Activated CD4-positive, alpha-beta T cell treated with anti-CD3 and anti-CD28 coated beads for 36 hours (primary cell): ENCODE measurements at regions of chr12 and their contacts with region 1.

Region 1: DNA sequence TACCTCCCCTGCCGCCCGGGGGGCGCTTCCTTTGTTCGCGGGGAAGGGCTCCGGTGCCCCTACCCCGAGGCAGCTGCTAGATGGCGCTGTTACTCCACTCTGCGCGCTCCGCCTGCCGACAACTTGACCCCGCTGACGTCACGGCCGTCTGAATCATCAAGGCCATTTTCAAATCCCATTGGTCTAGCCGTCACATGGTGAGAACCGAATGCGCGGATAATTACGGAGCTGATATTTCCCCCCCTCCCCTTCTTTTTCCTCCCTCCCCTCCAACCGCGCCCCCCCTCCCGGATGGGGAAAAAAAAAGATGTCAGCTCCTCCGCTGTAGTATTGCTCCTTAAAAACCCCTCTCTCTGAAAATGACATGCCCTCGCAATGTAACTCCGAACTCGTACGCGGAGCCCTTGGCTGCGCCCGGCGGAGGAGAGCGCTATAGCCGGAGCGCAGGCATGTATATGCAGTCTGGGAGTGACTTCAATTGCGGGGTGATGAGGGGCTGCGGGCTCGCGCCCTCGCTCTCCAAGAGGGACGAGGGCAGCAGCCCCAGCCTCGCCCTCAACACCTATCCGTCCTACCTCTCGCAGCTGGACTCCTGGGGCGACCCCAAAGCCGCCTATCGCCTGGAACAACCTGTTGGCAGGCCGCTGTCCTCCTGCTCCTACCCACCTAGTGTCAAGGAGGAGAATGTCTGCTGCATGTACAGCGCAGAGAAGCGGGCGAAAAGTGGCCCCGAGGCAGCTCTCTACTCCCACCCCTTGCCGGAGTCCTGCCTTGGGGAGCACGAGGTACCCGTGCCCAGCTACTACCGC is at the start of gene HOXC10:
- DNase-seq: peak; percentile 97
- ATAC-seq: peak; percentile 82
- H3K4me3 Mint-ChIP-seq: peak within 1 kb of the TSS; percentile 12
- H3K27ac Mint-ChIP-seq: no peak within 1 kb of the TSS
- H3K4me1 Mint-ChIP-seq: peaks cover 27% of the 10 kb centered on the region
- H3K27me3 Mint-ChIP-seq: peaks cover 85% of the 10 kb centered on the region
- total RNA-seq, gene HOXC10: not detected

Region 2: DNA sequence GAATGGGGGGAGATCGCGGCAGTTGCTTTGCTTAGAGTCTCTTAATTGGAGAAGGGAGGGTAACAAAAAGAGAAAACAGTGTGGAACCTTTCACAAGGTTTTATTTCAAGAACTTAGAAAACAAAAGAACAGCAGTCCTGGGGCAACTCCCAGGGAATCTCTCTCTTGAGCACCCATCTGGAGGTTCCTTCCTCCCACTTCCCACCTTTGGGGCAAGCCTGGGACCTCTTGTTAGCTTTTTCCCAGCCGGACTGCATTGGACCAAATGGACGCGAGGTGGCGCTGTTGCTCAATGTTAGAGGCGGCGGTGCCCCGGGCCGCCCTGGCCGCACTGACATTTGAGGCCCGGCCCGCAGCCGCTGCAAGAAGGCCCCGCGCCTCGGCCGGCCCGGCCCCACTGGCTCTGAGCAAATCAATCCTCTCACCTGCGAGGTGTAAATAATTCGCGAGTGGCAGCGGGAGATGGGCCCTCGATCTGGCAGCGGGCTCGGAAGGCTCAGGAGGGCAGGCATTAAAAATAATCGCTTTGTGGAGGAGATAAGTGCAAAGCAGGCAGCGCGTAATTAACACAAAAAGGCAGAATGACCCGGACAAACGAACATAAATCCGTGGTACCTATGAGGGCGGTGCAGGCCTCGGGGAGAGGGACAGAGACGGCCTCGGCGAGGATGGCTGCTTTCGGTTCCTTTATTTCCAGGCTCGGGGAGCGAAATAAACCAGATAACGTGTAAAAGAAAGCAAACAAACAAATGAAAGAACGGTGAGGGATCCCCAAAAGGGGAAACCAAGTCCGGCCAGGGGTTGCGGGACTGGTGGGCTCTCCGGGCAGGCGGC is 21.0 kb after region 1 on chr12:
- CTCF ChIA-PET with region 1: interaction called, 17 read pairs
- POLR2A ChIA-PET with region 1: no interaction called
- intact Hi-C with region 1: loop called (anchors 1 to 2 kb)
- DNase-seq: peak; percentile 91
- ATAC-seq: peak; percentile 81
- H3K4me3 Mint-ChIP-seq: peak overlapping the region; percentile 46
- H3K27ac Mint-ChIP-seq: no peak overlapping the region
- H3K4me1 Mint-ChIP-seq: peaks cover 29% of the 10 kb centered on the region
- H3K27me3 Mint-ChIP-seq: peaks cover 87% of the 10 kb centered on the region

Region 3: GRCh38 chr12:54053751-54054741 is 68.9 kb after region 1 on chr12 and contains the start of gene HOXC4:
- CTCF ChIA-PET with region 1: no interaction called
- POLR2A ChIA-PET with region 1: interaction called, 3 read pairs
- intact Hi-C with region 1: loop called (anchors 5 kb)
- DNase-seq: no peak
- ATAC-seq: no peak
- H3K4me3 Mint-ChIP-seq: peak within 1 kb of the TSS; percentile 0
- H3K27ac Mint-ChIP-seq: no peak within 1 kb of the TSS
- H3K4me1 Mint-ChIP-seq: peaks cover 21% of the 10 kb centered on the region
- H3K27me3 Mint-ChIP-seq: peaks cover 81% of the 10 kb centered on the region
- total RNA-seq, gene HOXC4: not detected

Region 4: DNA sequence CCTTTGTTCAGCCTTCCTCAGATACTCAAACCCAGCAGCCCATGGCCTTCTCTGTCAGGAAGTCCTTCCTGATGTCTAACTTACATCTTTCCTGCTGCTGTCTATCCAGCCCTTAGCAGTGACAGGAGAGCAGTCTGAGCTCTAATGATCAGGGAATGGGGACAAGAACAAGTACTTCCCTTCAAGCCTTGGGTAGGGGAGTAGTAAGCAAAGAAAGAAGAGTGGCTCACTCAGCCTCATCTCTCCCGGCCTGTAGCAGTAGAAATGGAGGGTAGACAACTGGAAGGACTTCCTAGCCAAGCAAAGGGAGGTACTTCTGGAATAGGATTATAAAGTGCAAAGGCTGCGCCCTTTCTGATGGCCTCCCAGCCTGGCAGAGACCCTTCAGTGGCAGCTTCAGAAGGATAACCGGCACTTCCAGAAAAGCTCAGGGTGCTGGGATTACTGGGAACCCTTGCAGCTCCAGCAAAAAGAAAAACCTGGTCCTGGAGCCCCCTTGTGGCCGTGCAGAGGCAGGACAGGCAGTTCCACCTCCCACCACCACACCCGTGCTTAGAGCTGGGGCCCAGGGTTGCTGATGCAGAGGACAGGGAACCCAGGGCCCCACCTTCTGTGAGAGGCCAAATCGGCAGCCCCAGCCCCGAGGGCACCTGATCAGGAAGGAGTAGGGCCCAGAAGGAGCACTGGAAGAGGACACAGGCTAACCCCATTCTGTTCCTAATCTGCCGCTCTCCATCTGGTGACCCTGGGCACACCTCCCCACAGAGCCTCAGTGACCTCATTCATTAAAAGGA is 216.1 kb after region 1 on chr12:
- CTCF ChIA-PET with region 1: interaction called, 37 read pairs
- POLR2A ChIA-PET with region 1: no interaction called
- intact Hi-C with region 1: loop called in 1 of 2 experiments (anchors 1 kb)
- DNase-seq: peak; percentile 83
- ATAC-seq: peak; percentile 95
- H3K4me3 Mint-ChIP-seq: no peak overlapping the region
- H3K27ac Mint-ChIP-seq: no peak overlapping the region
- H3K4me1 Mint-ChIP-seq: no peaks in the 10 kb centered on the region
- H3K27me3 Mint-ChIP-seq: peaks cover 44% of the 10 kb centered on the region

Region 5: GRCh38 chr12:54214553-54215406 is 229.7 kb after region 1 on chr12:
- CTCF ChIA-PET with region 1: interaction called, 37 read pairs
- POLR2A ChIA-PET with region 1: no interaction called
- intact Hi-C with region 1: loop called in 1 of 2 experiments (anchors 1 kb)
- DNase-seq: peak; percentile 97
- ATAC-seq: peak; percentile 92
- H3K4me3 Mint-ChIP-seq: peak overlapping the region; percentile 63
- H3K27ac Mint-ChIP-seq: no peak overlapping the region
- H3K4me1 Mint-ChIP-seq: peaks cover 26% of the 10 kb centered on the region
- H3K27me3 Mint-ChIP-seq: peaks cover 15% of the 10 kb centered on the region

Region 6: DNA sequence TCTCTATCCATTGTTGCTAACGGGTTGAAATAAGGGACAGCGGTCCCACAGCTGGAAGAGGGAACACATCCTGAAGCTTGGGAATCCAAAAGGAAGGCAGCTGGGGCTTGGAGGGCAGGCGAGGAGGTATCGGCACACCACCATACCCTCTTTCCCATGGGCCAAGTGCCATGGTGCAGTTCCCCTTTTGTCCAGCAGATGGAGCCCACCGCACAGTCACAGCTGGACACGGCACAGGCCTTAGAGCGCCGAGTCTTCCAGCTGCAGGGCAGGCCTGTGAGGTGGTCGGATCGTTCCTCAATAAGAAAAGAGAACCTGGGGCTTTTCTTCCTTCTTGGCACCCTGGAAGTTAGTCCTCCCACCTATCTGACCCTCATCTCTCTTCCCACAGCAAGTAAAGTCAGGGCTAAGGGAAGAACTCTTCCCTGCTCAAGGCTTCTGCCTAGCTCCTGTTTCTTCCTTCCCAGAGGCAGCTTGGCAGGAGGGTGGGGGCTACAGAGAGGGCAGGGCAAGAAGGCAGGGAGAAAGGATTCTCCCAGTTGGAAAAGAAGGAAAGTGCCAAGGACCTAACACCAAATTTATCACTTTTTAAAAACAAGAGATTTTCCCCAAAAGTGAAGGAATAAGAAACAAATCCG is 594.7 kb after region 1 on chr12:
- CTCF ChIA-PET with region 1: no interaction called
- POLR2A ChIA-PET with region 1: no interaction called
- intact Hi-C with region 1: no loop called
- DNase-seq: peak; percentile 92
- ATAC-seq: peak; percentile 97
- H3K4me3 Mint-ChIP-seq: no peak overlapping the region
- H3K27ac Mint-ChIP-seq: no peak overlapping the region
- H3K4me1 Mint-ChIP-seq: no peaks in the 10 kb centered on the region
- H3K27me3 Mint-ChIP-seq: peaks cover 3% of the 10 kb centered on the region